ENCODE measurements at regions of chr4 and their contacts with region 1.

Region 1: GRCh38 chr4:1130316-1131186 is 17.2 kb upstream of the RNF212 start:
- DNase-seq: peak; percentile 69 to 83 (median 76)
- H3K4me3 ChIP-seq: no peak overlapping the region
- H3K4me3 Mint-ChIP-seq: no peak overlapping the region
- H3K27ac ChIP-seq: no peak overlapping the region
- H3K27ac Mint-ChIP-seq: peak overlapping the region in 1 of 7 donors; percentile 34
- H3K4me1 ChIP-seq: no peaks in the 10 kb centered on the region
- H3K4me1 Mint-ChIP-seq: peaks cover 0 to 4% (median 2%) of the 10 kb centered on the region in 4 donors
- H3K27me3 ChIP-seq: no peaks in the 10 kb centered on the region
- H3K27me3 Mint-ChIP-seq: peaks cover 1 to 10% of the 10 kb centered on the region in 2 donors

Region 2: DNA sequence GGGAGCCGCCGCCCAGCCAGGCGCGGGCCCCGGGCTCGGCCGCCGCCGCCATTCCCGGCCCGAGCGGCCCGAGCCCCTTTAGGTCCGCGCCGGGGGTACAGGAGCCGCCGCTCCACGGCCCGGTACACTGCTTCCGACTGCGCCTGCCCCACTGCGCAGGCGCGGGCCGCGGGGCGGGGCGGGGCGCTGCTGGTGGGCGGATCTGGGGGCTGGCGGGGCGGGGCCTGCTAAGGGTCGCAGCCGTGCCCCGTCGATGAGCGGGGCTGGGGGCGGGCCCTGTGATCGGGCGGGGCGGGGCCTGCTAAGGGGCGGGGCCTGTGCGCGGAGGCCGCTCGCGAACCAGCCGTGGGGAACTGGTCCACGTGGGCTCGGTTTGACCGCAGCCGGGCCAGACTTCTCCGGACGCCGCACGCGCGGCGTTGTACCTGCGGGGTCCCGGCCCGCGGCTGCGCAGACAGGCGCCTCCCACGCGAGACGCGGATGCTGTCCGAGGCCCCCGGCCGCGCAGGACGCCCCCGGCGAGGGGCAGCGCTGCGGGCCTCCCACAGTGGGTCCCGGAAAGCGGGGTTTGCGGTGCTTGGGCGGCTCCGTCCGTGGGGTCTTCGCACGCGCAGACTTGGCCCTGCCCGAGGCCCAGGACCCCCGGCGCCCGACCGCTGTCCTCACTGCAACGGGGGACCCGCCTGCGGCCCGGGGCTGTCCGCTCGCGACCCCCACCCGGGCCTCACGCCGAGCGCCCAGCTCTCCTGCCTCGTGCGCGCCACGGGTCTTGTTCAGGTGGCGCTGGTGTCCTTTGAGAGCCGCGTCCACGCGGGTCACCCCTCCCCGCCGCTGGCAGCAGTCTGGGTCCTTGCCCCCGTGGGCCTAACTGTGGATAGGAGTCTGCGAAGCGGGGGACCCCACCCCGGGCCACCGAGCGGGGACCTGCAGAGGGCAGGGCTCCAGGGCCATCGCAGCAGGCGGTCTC is 156.8 kb before region 1 on chr4 and contains the start of gene DGKQ:
- CTCF ChIA-PET with region 1: no interaction called
- POLR2A ChIA-PET with region 1: no interaction called
- intact Hi-C with region 1: no loop called
- DNase-seq: peak; percentile 78 to 88 (median 83)
- H3K4me3 ChIP-seq: peak within 1 kb of the TSS; percentile 36 to 57
- H3K4me3 Mint-ChIP-seq: peak within 1 kb of the TSS; percentile 34 to 76 (median 52)
- H3K27ac ChIP-seq: peak within 1 kb of the TSS; percentile 51
- H3K27ac Mint-ChIP-seq: peak within 1 kb of the TSS in 1 of 7 donors; percentile 60
- H3K4me1 ChIP-seq: peaks cover 24% of the 10 kb centered on the region
- H3K4me1 Mint-ChIP-seq: peaks cover 0 to 13% (median 3%) of the 10 kb centered on the region in 4 donors
- H3K27me3 ChIP-seq: no peaks in the 10 kb centered on the region
- H3K27me3 Mint-ChIP-seq: no peaks in the 10 kb centered on the region
- total RNA-seq, gene DGKQ: 25.9 to 29.6 TPM

Region 3: DNA sequence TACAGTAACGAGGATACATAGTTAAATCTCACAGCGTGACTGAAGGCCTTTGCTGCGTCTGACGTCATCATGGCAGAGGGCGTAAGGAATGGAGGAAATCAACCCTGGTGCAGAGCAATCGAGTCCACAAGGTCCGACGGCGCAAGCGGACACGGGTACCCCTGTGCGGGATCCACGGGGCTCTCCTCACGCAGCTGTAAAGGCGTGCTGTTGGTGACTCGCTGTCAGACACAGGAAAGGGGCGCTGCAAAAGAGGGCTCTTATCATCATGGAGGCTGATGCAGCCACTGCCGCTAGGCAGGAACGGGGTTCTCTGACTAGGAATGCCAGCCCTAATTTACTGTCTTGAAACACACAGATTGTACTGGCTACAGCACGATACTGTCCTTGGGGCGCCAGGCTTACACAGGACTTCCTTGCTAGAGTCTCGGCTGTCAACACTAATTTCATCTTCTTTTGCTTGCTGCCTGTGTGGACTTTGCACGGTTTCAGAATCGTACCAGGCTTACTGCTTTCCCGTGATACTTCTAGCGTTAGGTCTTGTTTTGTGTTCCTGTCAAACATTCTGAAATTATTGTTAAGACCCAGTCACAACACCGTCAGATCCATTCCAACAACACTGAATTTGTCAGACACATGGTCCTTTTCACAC is 30.7 kb before region 1 on chr4:
- CTCF ChIA-PET with region 1: no interaction called
- POLR2A ChIA-PET with region 1: no interaction called
- intact Hi-C with region 1: no loop called
- DNase-seq: no peak
- H3K4me3 ChIP-seq: no peak overlapping the region
- H3K4me3 Mint-ChIP-seq: no peak overlapping the region
- H3K27ac ChIP-seq: no peak overlapping the region
- H3K27ac Mint-ChIP-seq: no peak overlapping the region
- H3K4me1 ChIP-seq: no peaks in the 10 kb centered on the region
- H3K4me1 Mint-ChIP-seq: no peaks in the 10 kb centered on the region
- H3K27me3 ChIP-seq: no peaks in the 10 kb centered on the region
- H3K27me3 Mint-ChIP-seq: peaks cover 0 to 3% of the 10 kb centered on the region in 2 donors

Region 4: DNA sequence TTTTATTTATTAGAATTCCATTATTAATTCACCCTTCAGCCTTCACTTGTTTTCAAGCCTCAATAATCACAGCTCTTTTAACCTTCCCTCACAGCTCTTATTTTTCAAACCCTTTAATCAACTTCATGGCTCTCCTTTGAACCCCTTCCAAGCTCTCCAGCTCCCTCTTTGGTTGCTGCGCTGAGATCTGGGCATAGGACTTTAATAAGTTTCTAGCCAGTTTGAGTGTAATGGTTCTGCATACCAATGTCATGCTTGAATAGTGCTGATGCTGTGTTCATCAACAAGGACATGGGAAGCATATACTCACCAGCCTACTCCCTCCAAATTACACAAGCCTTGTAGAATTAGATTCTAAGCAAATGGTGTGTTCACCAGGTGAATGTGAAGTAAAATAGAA is 13.7 kb before region 1 on chr4:
- CTCF ChIA-PET with region 1: interaction called, 22 read pairs
- POLR2A ChIA-PET with region 1: no interaction called
- intact Hi-C with region 1: no loop called
- DNase-seq: no peak
- H3K4me3 ChIP-seq: no peak overlapping the region
- H3K4me3 Mint-ChIP-seq: no peak overlapping the region
- H3K27ac ChIP-seq: no peak overlapping the region
- H3K27ac Mint-ChIP-seq: peak overlapping the region in 1 of 7 donors; percentile 8
- H3K4me1 ChIP-seq: no peaks in the 10 kb centered on the region
- H3K4me1 Mint-ChIP-seq: peaks cover 0 to 2% (median 0%) of the 10 kb centered on the region in 4 donors
- H3K27me3 ChIP-seq: no peaks in the 10 kb centered on the region
- H3K27me3 Mint-ChIP-seq: peaks cover 10 to 12% of the 10 kb centered on the region in 2 donors

Region 5: GRCh38 chr4:1249148-1249730 is 118.7 kb after region 1 on chr4:
- CTCF ChIA-PET with region 1: interaction called, 5 read pairs
- POLR2A ChIA-PET with region 1: interaction called, 11 read pairs
- intact Hi-C with region 1: no loop called
- DNase-seq: peak; percentile 77 to 93 (median 90)
- H3K4me3 ChIP-seq: peak overlapping the region; percentile 68 to 73
- H3K4me3 Mint-ChIP-seq: peak overlapping the region; percentile 86 to 92 (median 90)
- H3K27ac ChIP-seq: peak overlapping the region; percentile 88
- H3K27ac Mint-ChIP-seq: peak overlapping the region; percentile 93 to 99 (median 96)
- H3K4me1 ChIP-seq: peaks cover 74% of the 10 kb centered on the region
- H3K4me1 Mint-ChIP-seq: peaks cover 39 to 79% (median 67%) of the 10 kb centered on the region in 4 donors
- H3K27me3 ChIP-seq: no peaks in the 10 kb centered on the region
- H3K27me3 Mint-ChIP-seq: no peaks in the 10 kb centered on the region

Region 6: DNA sequence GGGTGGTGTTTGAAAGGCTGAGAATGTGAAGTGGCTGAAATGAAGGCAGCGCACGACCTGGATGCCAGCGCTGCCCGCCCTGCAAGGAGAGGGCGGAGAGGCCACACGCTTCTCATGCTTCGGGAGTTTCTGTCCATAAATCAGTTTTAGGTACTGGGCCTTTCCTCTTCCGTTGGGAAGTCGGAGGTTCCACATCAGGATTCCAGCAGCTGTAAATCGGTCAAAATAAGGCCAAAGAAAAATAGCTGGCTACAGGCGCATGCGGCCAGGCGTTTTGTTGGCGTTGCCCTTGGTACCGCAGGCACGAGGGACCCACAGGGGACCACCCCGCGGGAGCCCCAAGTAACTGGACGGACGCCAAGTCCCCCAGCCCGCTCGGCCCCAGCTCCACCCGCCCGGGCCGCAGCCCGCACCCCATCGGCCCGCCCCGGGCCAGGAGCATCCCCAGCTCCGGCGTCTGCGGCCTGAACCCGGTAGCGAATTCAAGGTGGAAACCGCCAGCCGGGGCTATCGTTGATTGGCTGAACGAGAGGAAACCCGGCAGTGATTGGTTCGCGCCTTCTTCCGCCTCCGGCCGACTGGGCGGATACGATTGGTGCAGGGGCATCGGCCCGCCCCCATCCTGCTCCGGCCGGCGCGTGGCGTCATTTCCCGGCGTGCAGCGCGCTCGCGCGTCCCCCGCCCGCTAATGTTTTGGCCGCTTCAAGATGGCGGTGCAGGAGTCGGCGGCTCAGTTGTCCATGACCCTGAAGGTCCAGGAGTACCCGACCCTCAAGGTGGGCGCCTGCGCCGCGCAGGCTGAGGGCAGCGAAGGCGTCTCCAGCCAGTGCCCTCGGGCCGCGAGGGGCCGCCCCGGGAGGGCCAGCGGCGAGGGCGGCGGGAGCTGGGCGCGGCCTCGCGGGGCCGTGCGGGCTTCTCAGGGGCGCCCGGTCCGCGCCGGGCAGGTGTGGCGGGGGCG is 158.9 kb after region 1 on chr4 and contains the start of gene MAEA:
- CTCF ChIA-PET with region 1: interaction called, 6 read pairs
- POLR2A ChIA-PET with region 1: no interaction called
- intact Hi-C with region 1: loop called (anchors 1 kb)
- DNase-seq: peak; percentile 97
- H3K4me3 ChIP-seq: peak within 1 kb of the TSS; percentile 78 to 86
- H3K4me3 Mint-ChIP-seq: peak within 1 kb of the TSS; percentile 90 to 94 (median 92)
- H3K27ac ChIP-seq: peak within 1 kb of the TSS; percentile 76
- H3K27ac Mint-ChIP-seq: peak within 1 kb of the TSS; percentile 82 to 97 (median 95)
- H3K4me1 ChIP-seq: peaks cover 49% of the 10 kb centered on the region
- H3K4me1 Mint-ChIP-seq: peaks cover 25 to 48% (median 39%) of the 10 kb centered on the region in 4 donors
- H3K27me3 ChIP-seq: no peaks in the 10 kb centered on the region
- H3K27me3 Mint-ChIP-seq: no peaks in the 10 kb centered on the region
- total RNA-seq, gene MAEA: 101 to 106 TPM

Region 7: DNA sequence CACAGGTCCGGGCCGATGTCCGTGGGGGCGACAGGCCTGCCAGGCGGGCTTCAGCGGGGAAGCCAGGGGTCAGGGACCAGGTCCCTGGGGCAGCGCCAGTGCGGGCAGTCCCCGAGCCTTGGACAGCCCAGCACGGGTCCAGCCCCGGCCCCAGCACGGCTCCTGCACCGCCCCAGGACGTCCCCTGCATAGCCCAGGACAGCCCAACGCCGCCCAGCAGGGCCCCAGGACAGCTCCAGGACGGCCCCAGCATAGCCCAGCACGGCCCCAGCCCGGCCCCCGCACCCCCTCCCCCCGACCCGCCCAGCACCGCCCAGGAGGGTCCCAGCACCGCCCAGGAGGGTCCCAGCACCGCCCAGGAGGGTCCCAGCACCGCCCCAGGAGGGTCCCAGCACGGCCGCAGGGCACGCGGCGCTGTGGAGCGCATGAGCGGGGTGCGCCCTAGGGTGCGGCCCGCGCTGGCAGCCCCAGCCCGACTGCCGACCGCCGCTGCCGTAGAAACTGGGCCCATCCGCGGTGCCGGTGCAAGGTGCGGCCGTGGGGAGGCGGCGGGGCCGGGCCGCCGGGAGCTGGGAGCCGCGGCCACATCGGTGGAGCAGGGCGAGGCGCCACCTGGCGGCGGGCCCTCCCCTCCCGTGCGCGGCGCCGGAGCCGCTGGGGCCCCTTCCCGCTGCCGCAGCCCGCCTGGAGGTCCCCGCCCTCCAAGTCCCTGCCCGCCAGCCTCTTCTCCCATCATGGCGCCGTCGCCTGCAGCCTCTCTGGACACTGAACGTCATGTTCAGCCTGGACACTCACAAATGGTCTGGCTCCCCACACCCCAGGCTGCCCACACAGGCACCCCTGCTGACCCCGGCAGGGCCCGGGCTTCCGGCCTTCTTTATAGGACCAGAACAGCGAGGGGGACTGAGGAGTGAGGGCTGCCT is 382.4 kb after region 1 on chr4:
- CTCF ChIA-PET with region 1: interaction called, 5 read pairs
- POLR2A ChIA-PET with region 1: no interaction called
- intact Hi-C with region 1: loop called (anchors 1 kb)
- DNase-seq: peak in 4 of 5 donors; percentile 39 to 63 (median 49)
- H3K4me3 ChIP-seq: no peak overlapping the region
- H3K4me3 Mint-ChIP-seq: peak overlapping the region in 4 of 8 donors; percentile 27 to 63 (median 42)
- H3K27ac ChIP-seq: no peak overlapping the region
- H3K27ac Mint-ChIP-seq: no peak overlapping the region
- H3K4me1 ChIP-seq: peaks cover 3% of the 10 kb centered on the region
- H3K4me1 Mint-ChIP-seq: no peaks in the 10 kb centered on the region
- H3K27me3 ChIP-seq: peaks cover 5% of the 10 kb centered on the region
- H3K27me3 Mint-ChIP-seq: peaks cover 3 to 8% of the 10 kb centered on the region in 2 donors

Region 8: DNA sequence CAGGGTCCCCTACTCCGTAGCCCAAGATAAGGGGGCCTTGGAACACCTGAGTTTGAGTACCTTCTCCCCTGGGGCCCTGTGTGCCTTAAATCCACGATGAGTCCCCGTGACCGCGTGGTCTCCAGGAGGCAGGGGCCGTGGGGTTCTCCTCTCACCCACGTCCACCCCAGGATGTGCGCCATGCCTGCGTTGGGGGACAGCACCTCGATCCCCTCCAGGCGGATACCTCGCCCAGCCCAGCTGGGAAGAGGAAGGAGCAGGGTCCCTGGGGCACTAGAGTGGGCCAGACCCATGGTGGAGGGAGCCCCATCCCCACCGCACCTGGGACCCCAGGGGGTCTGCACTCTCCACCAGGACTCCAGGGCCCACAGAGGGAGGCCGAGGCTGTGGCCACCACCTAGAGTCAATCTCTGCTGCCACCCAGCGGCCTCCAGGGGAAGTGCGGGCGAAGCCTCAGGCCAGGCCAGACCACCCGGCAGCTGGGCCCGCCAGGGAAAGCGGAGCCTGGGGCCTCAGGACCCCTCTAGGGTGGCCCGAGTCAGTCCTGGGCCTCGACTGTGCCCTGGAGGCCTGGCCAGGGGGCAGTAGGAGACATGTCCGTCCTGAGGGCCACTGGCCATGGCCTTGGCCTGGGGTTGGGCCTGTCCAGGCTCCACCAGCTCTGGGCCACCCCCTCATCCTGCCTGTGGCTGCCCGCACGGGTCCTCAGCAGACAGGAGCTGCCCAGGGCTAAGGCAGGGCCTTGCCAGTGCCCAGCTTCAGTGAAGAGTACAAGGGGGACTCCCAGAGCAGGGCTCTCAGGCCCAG is 498.5 kb after region 1 on chr4:
- CTCF ChIA-PET with region 1: interaction called, 7 read pairs
- POLR2A ChIA-PET with region 1: no interaction called
- intact Hi-C with region 1: loop called (anchors 1 kb)
- DNase-seq: peak; percentile 46 to 72 (median 64)
- H3K4me3 ChIP-seq: no peak overlapping the region
- H3K4me3 Mint-ChIP-seq: no peak overlapping the region
- H3K27ac ChIP-seq: no peak overlapping the region
- H3K27ac Mint-ChIP-seq: no peak overlapping the region
- H3K4me1 ChIP-seq: no peaks in the 10 kb centered on the region
- H3K4me1 Mint-ChIP-seq: no peaks in the 10 kb centered on the region
- H3K27me3 ChIP-seq: no peaks in the 10 kb centered on the region
- H3K27me3 Mint-ChIP-seq: no peaks in the 10 kb centered on the region